Activated CD8-positive, alpha-beta T cell treated with anti-CD3 and anti-CD28 coated beads, Interleukin-2, amount 10 ng/mL, durations not matched to agents 7 days and 5 days (primary cell): ENCODE measurements at regions of chrX and their contacts with region 1.

Region 1: DNA sequence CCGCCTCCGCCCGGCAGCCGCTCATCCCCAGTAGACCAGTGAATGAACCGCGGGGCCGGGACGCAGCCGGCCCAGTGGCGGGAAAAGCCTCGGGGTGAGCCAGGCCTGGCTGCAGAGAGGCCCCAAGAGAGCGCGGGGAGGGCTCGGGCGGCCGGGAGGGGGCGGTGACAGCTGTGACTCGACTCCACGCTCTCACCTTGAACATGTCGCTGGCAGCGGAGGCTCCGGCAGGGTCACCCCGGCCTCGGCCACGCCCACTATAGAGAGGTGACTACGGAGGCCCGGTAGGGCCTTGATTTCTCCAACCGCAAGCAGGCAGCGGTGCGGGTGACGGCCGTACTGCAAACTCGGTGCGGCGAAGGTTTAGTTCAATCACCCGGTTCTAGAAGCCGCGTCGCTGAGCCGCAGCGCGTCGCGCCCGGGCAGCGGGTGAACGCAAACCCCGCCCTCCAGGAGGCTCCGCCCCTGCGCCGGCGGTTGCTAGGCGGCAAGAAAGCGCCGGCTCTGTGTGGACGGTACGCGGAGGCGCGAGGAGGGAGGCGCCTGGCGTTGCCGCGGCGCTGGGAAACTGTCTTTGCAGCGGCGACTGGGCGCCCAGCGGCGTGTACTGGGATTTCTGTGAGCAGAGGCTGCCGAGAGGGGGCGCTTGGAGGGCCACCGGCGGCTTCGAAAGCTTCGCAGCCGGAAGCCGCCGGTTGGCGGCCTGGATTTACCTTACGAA is at the starts of genes APOO and CXorf58:
- DNase-seq: peak; percentile 92
- ATAC-seq: peak; percentile 97
- H3K4me3 Mint-ChIP-seq: peak within 1 kb of the TSS; percentile 75
- H3K27ac Mint-ChIP-seq: peak within 1 kb of the TSS; percentile 88
- H3K4me1 Mint-ChIP-seq: peaks cover 19% of the 10 kb centered on the region
- H3K27me3 Mint-ChIP-seq: no peaks in the 10 kb centered on the region
- total RNA-seq, gene APOO: 28.3 to 33.1 TPM
- total RNA-seq, gene CXorf58: 0.21 to 0.31 TPM

Region 2: DNA sequence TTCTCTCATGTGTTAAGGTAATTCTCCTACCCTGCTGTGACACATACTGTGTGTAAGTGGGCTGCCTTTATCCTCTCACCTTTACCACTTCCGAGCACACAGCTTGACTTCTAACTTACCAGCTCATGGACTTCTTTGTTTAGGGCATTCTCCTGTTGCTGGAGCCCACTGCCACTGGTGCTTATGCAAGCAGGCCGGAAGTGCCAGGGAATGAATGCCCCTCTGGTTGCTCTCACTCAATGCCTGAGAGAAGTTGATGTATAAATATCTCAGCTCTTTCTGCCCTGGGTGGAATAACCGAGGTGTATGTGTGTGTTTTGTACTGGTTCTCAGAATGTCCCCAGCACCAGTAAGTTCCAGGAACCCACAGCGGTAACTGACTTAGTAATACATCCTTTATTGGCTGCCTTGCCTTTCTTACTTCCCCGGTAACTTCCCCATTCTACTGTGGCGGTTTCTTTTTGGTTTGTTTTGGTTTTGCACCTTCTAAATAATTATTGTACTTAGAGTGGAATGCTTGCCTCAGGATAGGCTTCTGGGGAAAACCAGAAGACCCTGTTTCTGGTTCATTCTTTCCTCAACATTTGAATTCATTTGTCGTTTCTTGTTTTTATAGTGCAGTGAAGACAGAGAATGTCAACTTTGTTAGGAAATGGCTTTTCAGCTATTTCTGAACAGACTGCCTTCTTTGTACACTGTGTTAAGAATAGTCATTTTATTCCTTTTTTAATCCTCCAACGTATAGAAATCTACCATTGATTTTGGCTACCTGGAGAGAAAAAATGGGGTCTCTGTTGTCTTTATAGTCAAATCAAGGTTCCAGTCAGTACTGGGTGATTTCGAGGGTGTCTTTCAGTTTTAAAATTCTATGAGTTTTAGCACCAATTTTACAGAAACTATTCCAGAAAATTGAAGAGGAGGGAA is 45.6 kb after region 1 on chrX:
- CTCF ChIA-PET with region 1: interaction called, 6 read pairs
- POLR2A ChIA-PET with region 1: interaction called, 10 read pairs
- DNase-seq: peak; percentile 69
- ATAC-seq: peak; percentile 93
- H3K4me3 Mint-ChIP-seq: peak overlapping the region; percentile 81
- H3K27ac Mint-ChIP-seq: peak overlapping the region; percentile 94
- H3K4me1 Mint-ChIP-seq: peaks cover 22% of the 10 kb centered on the region
- H3K27me3 Mint-ChIP-seq: no peaks in the 10 kb centered on the region

Region 3: GRCh38 chrX:24024819-24025740 is 117.4 kb after region 1 on chrX:
- CTCF ChIA-PET with region 1: interaction called, 10 read pairs
- POLR2A ChIA-PET with region 1: interaction called, 6 read pairs
- DNase-seq: peak; percentile 89
- ATAC-seq: peak; percentile 91
- H3K4me3 Mint-ChIP-seq: peak overlapping the region; percentile 89
- H3K27ac Mint-ChIP-seq: peak overlapping the region; percentile 86
- H3K4me1 Mint-ChIP-seq: peaks cover 27% of the 10 kb centered on the region
- H3K27me3 Mint-ChIP-seq: no peaks in the 10 kb centered on the region

Region 4: DNA sequence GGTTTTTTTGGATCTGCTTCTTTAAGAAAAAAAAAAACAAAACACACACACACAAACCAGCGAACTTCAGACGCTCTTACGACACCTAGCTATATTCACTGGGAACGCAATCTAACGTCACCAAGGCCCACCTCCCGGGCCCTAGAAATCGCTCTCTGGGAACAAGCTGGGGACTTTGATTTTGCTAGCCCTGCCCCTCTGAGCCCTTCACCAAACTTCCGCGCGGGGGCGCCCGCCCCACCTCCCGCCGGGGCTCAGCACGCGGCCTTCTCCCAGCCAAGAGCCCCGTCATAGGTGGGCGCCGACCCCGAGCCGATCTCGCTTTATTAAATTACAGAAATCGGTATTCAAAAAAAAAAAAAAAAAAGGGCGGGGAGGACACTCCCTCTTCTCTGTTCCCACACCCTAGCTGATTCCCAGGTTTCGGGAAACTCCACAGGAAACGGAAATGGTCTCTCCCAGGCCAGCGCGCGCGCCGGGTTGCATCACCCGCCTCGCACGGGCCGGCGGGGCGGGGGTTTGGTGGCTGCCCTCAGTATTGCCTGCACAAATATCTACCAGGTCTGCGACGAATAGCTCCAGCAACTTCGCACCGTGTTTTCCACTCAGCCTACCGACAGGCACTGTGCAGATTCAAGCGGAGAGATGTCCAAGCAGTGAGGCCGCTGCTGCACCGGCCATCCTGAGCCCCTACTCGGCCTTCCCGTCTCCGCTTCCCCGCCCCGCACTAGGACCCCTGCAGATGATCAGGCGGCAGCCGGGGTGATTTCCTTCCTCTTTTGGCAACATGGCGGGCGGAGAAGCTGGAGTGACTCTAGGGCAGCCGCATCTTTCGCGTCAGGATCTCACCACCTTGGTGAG is 146.8 kb after region 1 on chrX and contains the start of gene EIF2S3:
- CTCF ChIA-PET with region 1: interaction called, 59 read pairs
- POLR2A ChIA-PET with region 1: interaction called, 20 read pairs
- DNase-seq: peak; percentile 91
- ATAC-seq: peak; percentile 89
- H3K4me3 Mint-ChIP-seq: no peak within 1 kb of the TSS
- H3K27ac Mint-ChIP-seq: peak within 1 kb of the TSS; percentile 100
- H3K4me1 Mint-ChIP-seq: peaks cover 6% of the 10 kb centered on the region
- H3K27me3 Mint-ChIP-seq: no peaks in the 10 kb centered on the region
- total RNA-seq, gene EIF2S3: 187 to 197 TPM